A673 (cell line): ENCODE measurements at regions of chr14 and their contacts with region 1.

Region 1: DNA sequence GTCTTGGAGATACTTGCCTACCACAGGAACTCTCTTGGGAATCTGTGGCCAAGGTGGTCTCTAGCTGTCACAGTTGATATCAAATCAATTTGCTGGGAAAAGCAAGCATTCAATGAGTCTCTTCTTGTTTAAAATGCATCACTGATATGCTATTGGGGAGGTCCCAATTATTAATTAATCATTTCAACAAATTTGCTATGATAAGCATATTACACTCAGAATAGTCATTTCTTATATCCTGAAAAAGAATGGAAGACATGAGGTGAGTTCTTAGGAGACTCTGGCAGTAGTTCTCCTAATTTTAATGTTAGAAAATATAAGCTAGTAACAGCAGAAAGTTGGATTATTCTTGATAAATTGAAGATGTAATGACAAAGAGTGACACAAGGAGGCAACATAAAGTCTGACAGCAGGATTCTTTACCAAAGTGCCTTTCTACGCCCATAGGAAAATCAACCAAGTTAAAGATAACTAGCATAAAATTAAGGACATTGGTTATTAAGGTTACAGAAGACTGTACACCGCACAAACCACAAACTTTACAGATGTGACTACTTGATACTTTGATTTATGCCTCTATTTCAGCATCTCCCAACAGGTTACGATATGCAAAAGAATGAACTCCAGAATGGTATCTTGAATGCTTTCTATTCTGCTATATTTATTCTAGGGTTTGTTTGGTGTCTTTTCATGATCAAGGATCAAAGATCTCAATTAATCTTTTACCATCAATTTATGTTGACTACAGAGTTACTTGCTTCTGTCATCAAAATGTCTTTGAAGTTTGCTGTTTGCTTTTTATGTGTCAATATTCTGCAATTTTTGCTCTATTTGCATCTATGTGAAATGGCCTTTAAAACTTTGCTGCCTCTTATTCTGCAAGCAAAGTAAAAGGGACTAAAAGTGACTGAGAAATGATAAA is 349.6 kb upstream of the CLEC14A start:
- DNase-seq: peak; percentile 20
- H3K4me3 ChIP-seq: no peak overlapping the region
- H3K27ac ChIP-seq: no peak overlapping the region
- H3K4me1 ChIP-seq: no peaks in the 10 kb centered on the region
- H3K27me3 ChIP-seq: no peaks in the 10 kb centered on the region
- CTCF ChIP-seq: peak; percentile 43; the same call in 1 of the 2 replicates

Region 2: GRCh38 chr14:37369425-37369824 is 1236.0 kb before region 1 on chr14:
- CTCF ChIA-PET with region 1: no interaction called
- POLR2A ChIA-PET with region 1: interaction called, 15 read pairs
- intact Hi-C with region 1: no loop called
- DNase-seq: no peak
- H3K4me3 ChIP-seq: no peak overlapping the region
- H3K27ac ChIP-seq: no peak overlapping the region
- H3K4me1 ChIP-seq: no peaks in the 10 kb centered on the region
- H3K27me3 ChIP-seq: no peaks in the 10 kb centered on the region
- CTCF ChIP-seq: no peak

Region 3: GRCh38 chr14:38208618-38209562 is 396.6 kb before region 1 on chr14:
- CTCF ChIA-PET with region 1: no interaction called
- POLR2A ChIA-PET with region 1: no interaction called
- intact Hi-C with region 1: loop called (anchors 5 kb)
- DNase-seq: peak; percentile 81
- H3K4me3 ChIP-seq: peak overlapping the region; percentile 55
- H3K27ac ChIP-seq: no peak overlapping the region
- H3K4me1 ChIP-seq: peaks cover 4% of the 10 kb centered on the region
- H3K27me3 ChIP-seq: peaks cover 26% of the 10 kb centered on the region
- CTCF ChIP-seq: peak; percentile 48